A673 (cell line): ENCODE measurements at regions of chr17 and their contacts with region 1.

Region 1: GRCh38 chr17:59786536-59787319 is 79.3 kb downstream of the VMP1 start:
- DNase-seq: peak; percentile 96
- H3K4me3 ChIP-seq: peak overlapping the region; percentile 10
- H3K27ac ChIP-seq: peak overlapping the region; percentile 96
- H3K4me1 ChIP-seq: peaks cover 60% of the 10 kb centered on the region
- H3K27me3 ChIP-seq: no peaks in the 10 kb centered on the region
- CTCF ChIP-seq: no peak

Region 2: DNA sequence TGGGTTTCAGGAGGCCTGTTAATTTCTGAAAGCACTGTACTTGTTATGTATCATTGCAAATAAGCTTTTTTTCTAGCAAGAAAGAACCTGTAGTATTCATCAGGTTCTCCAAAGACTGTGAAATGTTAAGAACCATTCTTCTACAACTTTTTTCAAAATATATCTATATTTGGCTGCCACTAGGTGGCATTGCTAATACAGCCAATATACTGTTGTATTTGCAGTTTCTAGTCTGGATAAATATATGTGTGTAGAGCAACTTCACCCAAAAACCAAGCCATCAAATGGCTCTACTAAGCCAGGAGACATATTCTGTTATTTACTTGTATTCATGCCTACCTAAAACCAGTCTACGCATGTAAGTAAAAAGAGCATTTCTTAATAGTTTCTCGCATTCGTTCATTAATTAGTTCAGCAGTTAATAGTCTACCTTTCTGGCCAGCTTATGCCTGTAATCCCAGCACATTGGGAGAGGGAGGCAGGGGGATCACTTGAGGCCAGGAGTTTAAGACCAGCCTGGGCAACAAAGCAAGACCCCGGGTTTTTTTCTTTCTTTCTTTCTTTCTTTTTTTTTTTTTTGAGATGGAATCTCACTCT is 39.8 kb before region 1 on chr17:
- CTCF ChIA-PET with region 1: no interaction called
- POLR2A ChIA-PET with region 1: no interaction called
- intact Hi-C with region 1: no loop called
- DNase-seq: peak; percentile 63
- H3K4me3 ChIP-seq: no peak overlapping the region
- H3K27ac ChIP-seq: no peak overlapping the region
- H3K4me1 ChIP-seq: peaks cover 7% of the 10 kb centered on the region
- H3K27me3 ChIP-seq: no peaks in the 10 kb centered on the region
- CTCF ChIP-seq: peak; percentile 78

Region 3: DNA sequence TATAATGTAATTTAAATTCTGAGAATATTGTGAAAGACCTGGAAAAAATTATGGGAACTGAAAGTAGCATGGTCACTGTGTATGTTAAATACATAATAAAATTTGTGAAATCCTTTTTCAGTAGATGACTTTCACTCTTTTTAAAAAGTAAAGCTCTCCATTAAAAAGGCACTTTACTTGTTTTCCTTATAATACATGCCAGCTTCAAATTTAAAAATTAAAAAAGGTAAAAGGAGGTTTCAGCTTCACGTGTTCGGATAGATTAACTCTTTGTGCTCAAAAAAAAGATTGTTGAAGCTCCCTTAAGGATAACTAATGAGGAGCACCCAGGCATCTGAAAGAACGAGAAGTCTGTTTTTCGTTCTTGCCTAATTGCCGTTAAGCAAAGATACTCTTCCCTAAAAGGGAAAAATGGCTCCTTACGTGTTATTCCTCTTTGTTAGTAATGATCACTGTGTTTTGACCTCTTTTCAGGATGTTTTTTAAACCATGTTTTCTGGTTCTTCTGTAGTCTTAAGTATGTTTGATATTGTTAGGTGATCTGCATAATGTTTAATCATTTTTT is 18.3 kb after region 1 on chr17:
- CTCF ChIA-PET with region 1: no interaction called
- POLR2A ChIA-PET with region 1: interaction called, 6 read pairs
- intact Hi-C with region 1: loop called (anchors 2 kb)
- DNase-seq: peak; percentile 87
- H3K4me3 ChIP-seq: peak overlapping the region; percentile 39
- H3K27ac ChIP-seq: peak overlapping the region; percentile 87
- H3K4me1 ChIP-seq: peaks cover 34% of the 10 kb centered on the region
- H3K27me3 ChIP-seq: no peaks in the 10 kb centered on the region
- CTCF ChIP-seq: no peak

Region 4: GRCh38 chr17:59829217-59830006 is 42.7 kb after region 1 on chr17:
- CTCF ChIA-PET with region 1: interaction called, 3 read pairs
- POLR2A ChIA-PET with region 1: interaction called, 3 read pairs
- intact Hi-C with region 1: loop called (anchors 2 kb)
- DNase-seq: peak; percentile 99
- H3K4me3 ChIP-seq: peak overlapping the region; percentile 27
- H3K27ac ChIP-seq: peak overlapping the region; percentile 97
- H3K4me1 ChIP-seq: peaks cover 75% of the 10 kb centered on the region
- H3K27me3 ChIP-seq: no peaks in the 10 kb centered on the region
- CTCF ChIP-seq: no peak

Region 5: DNA sequence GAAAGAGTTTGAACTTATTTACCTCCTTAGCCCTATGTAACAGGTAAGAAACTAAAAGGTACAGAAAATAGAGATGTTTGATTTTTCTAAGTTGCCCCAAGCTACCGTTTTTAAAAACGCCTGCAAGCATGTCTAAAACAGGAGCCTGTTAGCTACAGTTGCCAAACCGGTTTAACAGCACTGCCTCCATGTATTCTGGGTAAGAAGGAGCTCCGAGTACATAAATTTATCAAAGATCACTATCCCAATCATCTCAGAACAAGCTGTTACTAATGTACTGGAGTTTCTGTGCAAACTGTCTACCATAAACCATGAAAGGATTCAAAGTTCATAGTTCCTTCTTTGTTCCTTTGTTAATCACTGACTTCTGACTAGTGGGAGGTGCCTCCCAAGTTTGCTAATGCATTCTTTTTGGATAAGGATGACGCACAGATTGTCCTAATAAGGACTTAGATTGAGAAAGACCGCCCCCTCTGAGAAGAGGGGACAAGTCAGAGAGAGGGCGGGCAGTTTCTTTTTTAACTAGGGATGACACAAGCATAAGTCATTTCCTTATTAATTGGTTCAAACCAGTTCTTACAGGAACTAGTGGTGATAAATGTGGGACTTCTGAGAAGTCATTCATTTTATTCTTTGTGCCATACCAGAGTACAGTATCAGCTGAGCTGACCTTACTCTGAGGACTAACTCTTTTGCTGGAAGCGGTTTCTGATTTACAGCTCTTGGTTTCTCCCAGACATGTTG is 50.8 kb after region 1 on chr17:
- CTCF ChIA-PET with region 1: no interaction called
- POLR2A ChIA-PET with region 1: interaction called, 21 read pairs
- intact Hi-C with region 1: loop called (anchors 2 kb)
- DNase-seq: peak; percentile 100
- H3K4me3 ChIP-seq: peak overlapping the region; percentile 55
- H3K27ac ChIP-seq: peak overlapping the region; percentile 100
- H3K4me1 ChIP-seq: peaks cover 34% of the 10 kb centered on the region
- H3K27me3 ChIP-seq: no peaks in the 10 kb centered on the region
- CTCF ChIP-seq: no peak

Region 6: DNA sequence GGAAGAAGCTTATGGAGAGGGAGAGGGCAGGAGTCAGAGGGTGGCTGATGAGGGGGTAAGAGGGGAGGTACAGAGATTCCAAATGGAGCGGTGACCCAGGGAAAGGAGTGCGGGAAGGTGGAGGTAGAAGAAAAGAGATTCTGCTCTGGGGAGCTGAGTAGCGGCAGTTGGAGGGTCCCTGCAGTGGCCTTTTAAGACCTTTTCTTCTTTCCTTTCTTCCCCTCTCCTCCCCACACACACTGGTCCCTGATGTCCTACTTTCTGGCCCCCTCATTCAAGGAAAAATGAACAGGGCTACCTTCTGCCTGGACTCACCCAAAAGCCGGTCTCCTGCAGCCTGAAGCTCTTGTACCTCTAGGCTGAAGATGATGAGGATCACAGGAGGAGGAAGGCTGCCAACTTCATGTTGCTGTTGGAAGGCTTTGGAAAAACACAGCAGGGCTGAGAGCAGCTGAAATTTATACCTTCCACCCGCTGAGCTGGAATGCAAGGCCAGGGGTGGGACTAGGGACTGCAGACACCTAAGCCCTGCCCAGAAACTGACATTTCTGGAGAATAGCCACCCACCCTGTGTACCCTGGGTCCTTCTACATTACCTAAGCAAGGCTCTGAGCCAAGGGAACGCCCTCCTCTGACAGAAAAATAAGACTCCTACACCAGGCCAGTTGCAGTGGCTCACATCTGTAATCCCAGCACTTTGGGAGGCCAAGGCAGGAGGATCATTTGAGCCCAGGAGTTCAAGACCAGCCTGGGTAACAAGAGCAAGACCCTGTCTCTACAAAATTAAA is 301.3 kb after region 1 on chr17:
- CTCF ChIA-PET with region 1: no interaction called
- POLR2A ChIA-PET with region 1: interaction called, 20 read pairs
- intact Hi-C with region 1: no loop called
- DNase-seq: peak; percentile 37
- H3K4me3 ChIP-seq: no peak overlapping the region
- H3K27ac ChIP-seq: no peak overlapping the region
- H3K4me1 ChIP-seq: no peaks in the 10 kb centered on the region
- H3K27me3 ChIP-seq: no peaks in the 10 kb centered on the region
- CTCF ChIP-seq: no peak